Activated naive CD8-positive, alpha-beta T cell treated with anti-CD3 and anti-CD28 coated beads, Interleukin-2, amount 10 ng/mL, durations not matched to agents 7 days and 5 days (primary cell): ENCODE measurements at regions of chr1 and their contacts with region 1.

Region 1: GRCh38 chr1:26306290-26307229 is at the start of gene UBXN11:
- DNase-seq: peak; percentile 88
- ATAC-seq: peak; percentile 99
- H3K4me3 Mint-ChIP-seq: peak within 1 kb of the TSS; percentile 94
- H3K27ac Mint-ChIP-seq: peak within 1 kb of the TSS; percentile 97
- H3K4me1 Mint-ChIP-seq: peaks cover 30% of the 10 kb centered on the region
- H3K27me3 Mint-ChIP-seq: no peaks in the 10 kb centered on the region
- total RNA-seq, gene UBXN11: 60.5 to 64.1 TPM

Region 2: DNA sequence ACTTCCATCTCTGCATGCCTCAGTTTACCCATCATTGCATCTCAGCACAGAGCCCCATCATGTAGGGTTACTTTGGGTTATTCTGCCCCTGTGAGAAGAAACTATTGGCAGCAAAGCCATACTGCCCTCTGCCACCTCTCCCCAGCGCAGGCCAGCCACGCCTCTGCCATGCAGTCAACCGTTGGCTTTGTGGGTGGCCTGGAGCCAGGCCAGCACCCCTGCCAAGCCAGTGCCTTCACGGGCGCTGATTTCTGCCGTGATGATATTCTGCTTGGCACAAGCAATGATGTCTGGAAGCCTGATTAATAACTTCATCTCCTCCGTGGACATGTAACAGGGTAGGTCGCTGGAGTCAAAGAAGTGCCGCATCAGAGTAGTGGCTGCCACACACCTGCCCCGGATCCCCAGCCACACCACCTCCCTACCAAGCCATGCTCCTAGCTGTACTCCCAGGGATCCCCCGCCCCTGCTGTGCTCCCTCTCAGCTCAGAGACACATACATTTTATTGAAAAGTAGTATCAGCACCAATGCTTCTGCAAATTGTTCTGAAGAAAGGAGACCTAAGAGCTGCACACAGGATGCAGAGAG is 87.6 kb before region 1 on chr1:
- POLR2A ChIA-PET with region 1: no interaction called
- DNase-seq: no peak
- ATAC-seq: no peak
- H3K4me3 Mint-ChIP-seq: no peak overlapping the region
- H3K27ac Mint-ChIP-seq: no peak overlapping the region
- H3K4me1 Mint-ChIP-seq: no peaks in the 10 kb centered on the region
- H3K27me3 Mint-ChIP-seq: peaks cover 15% of the 10 kb centered on the region

Region 3: DNA sequence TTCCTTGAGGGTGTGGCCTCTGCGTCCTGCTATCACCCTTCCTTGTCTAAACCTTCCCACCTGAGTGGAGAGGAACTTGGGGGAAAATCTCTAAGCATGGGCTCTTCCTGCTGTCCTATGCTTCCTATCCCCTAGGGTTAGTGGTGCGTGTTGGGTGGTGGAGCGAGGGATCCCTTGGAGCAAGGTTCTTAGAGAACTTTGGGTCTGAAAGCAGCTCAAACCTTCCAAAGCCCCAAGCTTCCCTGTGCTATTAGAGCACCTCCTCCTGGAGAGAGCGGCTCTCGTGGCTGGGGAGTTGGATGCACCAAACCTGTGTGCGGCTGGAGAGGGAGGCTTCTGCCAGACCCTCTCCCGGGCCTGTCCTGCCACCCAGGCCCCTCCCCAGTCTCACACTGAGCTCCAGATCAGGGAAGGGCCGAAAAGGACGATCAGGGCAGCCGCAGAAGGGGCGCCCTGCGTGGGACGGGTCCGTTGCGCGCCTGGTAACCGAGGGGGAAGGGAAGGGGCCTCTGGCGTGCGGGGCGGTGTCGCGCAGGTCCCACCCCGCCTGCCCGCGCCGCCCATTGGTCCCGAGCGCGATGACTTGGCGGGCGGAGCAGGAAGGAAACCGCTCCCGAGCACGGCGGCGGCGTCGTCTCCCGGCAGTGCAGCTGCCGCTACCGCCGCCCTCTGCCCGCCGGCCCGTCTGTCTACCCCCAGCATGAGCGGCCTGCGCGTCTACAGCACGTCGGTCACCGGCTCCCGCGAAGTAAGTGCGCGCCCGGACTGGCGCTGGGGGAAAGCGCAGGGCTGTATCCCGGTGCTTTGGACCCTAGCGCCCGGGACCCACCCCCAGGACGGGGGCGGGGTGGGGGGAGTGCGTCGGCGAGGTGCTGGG is 26.9 kb before region 1 on chr1 and contains the start of gene SH3BGRL3:
- POLR2A ChIA-PET with region 1: interaction called, 1,079 read pairs
- DNase-seq: peak; percentile 88
- ATAC-seq: peak; percentile 55
- H3K4me3 Mint-ChIP-seq: peak within 1 kb of the TSS; percentile 98
- H3K27ac Mint-ChIP-seq: peak within 1 kb of the TSS; percentile 93
- H3K4me1 Mint-ChIP-seq: peaks cover 70% of the 10 kb centered on the region
- H3K27me3 Mint-ChIP-seq: no peaks in the 10 kb centered on the region
- total RNA-seq, gene SH3BGRL3: 531 to 542 TPM

Region 4: GRCh38 chr1:26321315-26322041 is 14.9 kb after region 1 on chr1:
- POLR2A ChIA-PET with region 1: interaction called, 141 read pairs
- DNase-seq: peak; percentile 95
- ATAC-seq: peak; percentile 71
- H3K4me3 Mint-ChIP-seq: peak overlapping the region; percentile 94
- H3K27ac Mint-ChIP-seq: peak overlapping the region; percentile 99
- H3K4me1 Mint-ChIP-seq: peaks cover 36% of the 10 kb centered on the region
- H3K27me3 Mint-ChIP-seq: no peaks in the 10 kb centered on the region

Region 5: GRCh38 chr1:26363549-26364448 is 57.2 kb after region 1 on chr1:
- POLR2A ChIA-PET with region 1: no interaction called
- DNase-seq: peak; percentile 92
- ATAC-seq: peak; percentile 80
- H3K4me3 Mint-ChIP-seq: peak overlapping the region; percentile 67
- H3K27ac Mint-ChIP-seq: no peak overlapping the region
- H3K4me1 Mint-ChIP-seq: peaks cover 48% of the 10 kb centered on the region
- H3K27me3 Mint-ChIP-seq: peaks cover 15% of the 10 kb centered on the region

Region 6: GRCh38 chr1:26391450-26391849 is 84.9 kb after region 1 on chr1:
- POLR2A ChIA-PET with region 1: no interaction called
- DNase-seq: no peak
- ATAC-seq: peak; percentile 66
- H3K4me3 Mint-ChIP-seq: peak overlapping the region; percentile 60
- H3K27ac Mint-ChIP-seq: peak overlapping the region; percentile 82
- H3K4me1 Mint-ChIP-seq: peaks cover 55% of the 10 kb centered on the region
- H3K27me3 Mint-ChIP-seq: peaks cover 4% of the 10 kb centered on the region